ENCODE measurements at regions of chr1 and their contacts with region 1.

Region 1: DNA sequence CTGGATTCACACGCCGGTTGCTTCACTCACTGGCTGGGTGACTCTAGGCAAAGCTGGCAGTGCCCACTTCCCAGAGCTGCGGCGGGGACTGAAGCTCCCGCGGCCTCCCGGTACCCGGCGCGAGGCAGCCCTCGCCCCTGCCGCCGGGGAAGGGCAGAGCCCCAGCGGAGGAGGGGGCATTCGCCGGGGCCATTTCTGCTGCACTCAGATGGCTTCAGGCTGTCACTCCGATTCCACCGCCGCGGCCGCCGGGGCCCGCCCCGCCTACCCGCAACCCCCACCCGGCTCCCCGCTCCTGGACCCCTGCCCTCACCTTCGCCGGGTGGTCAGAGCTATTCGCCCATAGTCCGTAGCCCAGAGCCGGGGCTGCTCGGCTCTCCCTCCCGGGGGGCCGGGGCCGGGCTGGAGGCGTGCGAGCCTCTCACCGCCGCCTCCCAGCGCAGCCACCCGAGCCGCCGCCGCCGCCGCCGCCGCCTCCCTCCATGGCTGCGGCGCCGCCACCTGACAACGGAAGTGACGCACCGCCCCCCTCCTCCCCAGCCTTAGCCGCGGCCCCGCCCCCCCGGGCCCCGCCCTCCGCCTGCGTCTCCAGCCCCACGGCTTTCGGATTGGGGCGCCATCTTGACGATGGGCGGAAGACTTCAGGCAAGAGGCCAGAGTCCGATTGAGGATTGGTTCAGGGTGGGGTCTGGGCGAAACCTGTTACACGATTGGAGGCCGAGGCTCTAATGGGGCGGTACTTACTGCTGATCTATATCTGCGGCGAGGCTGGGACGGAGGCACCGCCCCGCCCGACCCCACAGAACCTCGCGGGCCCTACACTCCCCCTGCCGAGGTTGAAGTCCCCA is at the start of gene STK40:
- DNase-seq: peak; percentile 97 to 98
- H3K4me3 ChIP-seq: peak within 1 kb of the TSS; percentile 98
- H3K27ac ChIP-seq: peak within 1 kb of the TSS; percentile 99
- H3K4me1 ChIP-seq: peaks cover 33% of the 10 kb centered on the region
- H3K27me3 ChIP-seq: no peaks in the 10 kb centered on the region
- CTCF ChIP-seq: no peak
- total RNA-seq, gene STK40: 42.9 and 59.2 TPM in 2 replicates

Region 2: DNA sequence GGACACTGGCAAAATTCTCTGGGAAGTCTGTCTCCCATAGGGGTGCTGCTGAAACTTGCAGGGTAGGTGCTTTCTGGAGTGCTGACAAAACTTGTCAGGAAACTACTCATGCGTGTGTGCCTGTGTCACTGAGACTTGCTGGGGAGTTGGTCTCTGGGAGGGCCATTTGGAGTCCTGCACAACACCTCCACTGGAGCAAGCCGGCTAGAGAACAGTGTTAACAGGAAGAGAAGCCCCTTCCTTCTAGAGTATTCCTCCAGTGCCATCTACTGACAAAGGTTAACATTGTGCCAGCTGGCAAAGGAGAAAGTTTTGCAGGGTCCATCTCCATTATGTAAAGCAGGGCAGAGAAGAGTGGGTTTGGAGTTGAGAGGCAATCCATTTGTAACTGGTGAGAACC is 1087.2 kb before region 1 on chr1:
- CTCF ChIA-PET with region 1: no interaction called
- POLR2A ChIA-PET with region 1: no interaction called
- intact Hi-C with region 1: no loop called
- DNase-seq: no peak
- H3K4me3 ChIP-seq: no peak overlapping the region
- H3K27ac ChIP-seq: no peak overlapping the region
- H3K4me1 ChIP-seq: no peaks in the 10 kb centered on the region
- H3K27me3 ChIP-seq: no peaks in the 10 kb centered on the region
- CTCF ChIP-seq: peak; percentile 52; the same call in 1 of the 2 replicates

Region 3: DNA sequence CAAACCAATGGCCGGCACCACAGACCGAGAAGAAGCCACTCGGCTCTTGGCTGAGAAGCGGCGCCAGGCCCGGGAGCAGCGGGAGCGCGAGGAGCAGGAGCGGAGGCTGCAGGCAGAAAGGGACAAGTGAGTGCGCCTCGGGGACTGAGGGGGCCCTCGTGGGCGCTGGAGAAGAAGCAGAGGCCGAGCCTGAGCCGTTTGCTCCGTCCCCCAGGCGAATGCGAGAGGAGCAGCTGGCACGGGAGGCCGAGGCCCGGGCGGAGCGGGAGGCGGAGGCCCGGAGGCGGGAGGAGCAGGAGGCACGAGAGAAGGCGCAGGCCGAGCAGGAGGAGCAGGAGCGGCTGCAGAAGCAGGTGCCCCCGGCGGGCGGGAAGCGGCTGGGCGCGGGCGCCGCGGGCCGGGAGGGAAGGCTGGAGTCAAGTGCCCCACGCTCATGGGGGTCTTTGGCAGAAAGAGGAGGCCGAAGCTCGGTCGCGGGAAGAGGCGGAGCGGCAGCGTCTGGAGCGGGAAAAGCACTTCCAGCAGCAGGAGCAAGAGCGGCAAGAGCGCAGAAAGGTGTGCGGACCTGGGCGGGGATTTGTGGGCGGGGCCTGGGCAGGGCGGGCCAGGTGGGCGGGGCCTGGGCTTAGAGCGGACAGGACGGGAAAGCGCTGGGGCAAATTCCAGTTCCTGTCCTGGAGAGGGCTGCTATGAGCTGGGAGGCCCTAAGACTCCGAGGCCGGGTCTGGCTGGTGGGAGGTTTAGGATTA is 207.0 kb before region 1 on chr1:
- CTCF ChIA-PET with region 1: interaction called, 12 read pairs
- POLR2A ChIA-PET with region 1: no interaction called
- intact Hi-C with region 1: no loop called
- DNase-seq: no peak
- H3K4me3 ChIP-seq: no peak overlapping the region
- H3K27ac ChIP-seq: no peak overlapping the region
- H3K4me1 ChIP-seq: no peaks in the 10 kb centered on the region
- H3K27me3 ChIP-seq: no peaks in the 10 kb centered on the region
- CTCF ChIP-seq: no peak

Region 4: GRCh38 chr1:36350659-36351226 is 34.9 kb before region 1 on chr1:
- CTCF ChIA-PET with region 1: interaction called, 7 read pairs
- POLR2A ChIA-PET with region 1: interaction called, 8 read pairs
- intact Hi-C with region 1: loop called (anchors 1 kb)
- DNase-seq: peak; percentile 89 to 91
- H3K4me3 ChIP-seq: peak overlapping the region; percentile 41; the same call in 1 of the 2 replicates
- H3K27ac ChIP-seq: peak overlapping the region; percentile 97
- H3K4me1 ChIP-seq: peaks cover 67% of the 10 kb centered on the region
- H3K27me3 ChIP-seq: no peaks in the 10 kb centered on the region
- CTCF ChIP-seq: no peak

Region 5: GRCh38 chr1:36411674-36412520 is 26.3 kb after region 1 on chr1:
- CTCF ChIA-PET with region 1: interaction called, 4 read pairs
- POLR2A ChIA-PET with region 1: interaction called, 10 read pairs
- intact Hi-C with region 1: loop called (anchors 1 kb)
- DNase-seq: peak in 1 of 2 experiments; percentile 57
- H3K4me3 ChIP-seq: no peak overlapping the region
- H3K27ac ChIP-seq: no peak overlapping the region
- H3K4me1 ChIP-seq: peaks cover 24% of the 10 kb centered on the region
- H3K27me3 ChIP-seq: no peaks in the 10 kb centered on the region
- CTCF ChIP-seq: no peak

Region 6: GRCh38 chr1:36436817-36437216 is 51.2 kb after region 1 on chr1:
- CTCF ChIA-PET with region 1: no interaction called
- POLR2A ChIA-PET with region 1: no interaction called
- intact Hi-C with region 1: loop called (anchors 1 kb)
- DNase-seq: peak; percentile 74 to 98
- H3K4me3 ChIP-seq: no peak overlapping the region
- H3K27ac ChIP-seq: peak overlapping the region; percentile 100
- H3K4me1 ChIP-seq: peaks cover 33% of the 10 kb centered on the region
- H3K27me3 ChIP-seq: no peaks in the 10 kb centered on the region
- CTCF ChIP-seq: no peak

Measured in PC-9 (cell line).